Kidney (tissue), 22 donors: ENCODE measurements at regions of chr22 and their contacts with region 1.

Region 1: GRCh38 chr22:29040385-29041275 is 21.0 kb downstream of the C22orf31 start:
- DNase-seq: peak in 3 of 5 donors; percentile 79 to 90 (median 89)
- H3K4me3 ChIP-seq: no peak overlapping the region
- H3K27ac ChIP-seq: no peak overlapping the region
- H3K4me1 ChIP-seq: peaks cover 4 to 7% (median 6%) of the 10 kb centered on the region in 3 donors
- H3K27me3 ChIP-seq: no peaks in the 10 kb centered on the region
- CTCF ChIP-seq: peak; percentile 99

Region 2: DNA sequence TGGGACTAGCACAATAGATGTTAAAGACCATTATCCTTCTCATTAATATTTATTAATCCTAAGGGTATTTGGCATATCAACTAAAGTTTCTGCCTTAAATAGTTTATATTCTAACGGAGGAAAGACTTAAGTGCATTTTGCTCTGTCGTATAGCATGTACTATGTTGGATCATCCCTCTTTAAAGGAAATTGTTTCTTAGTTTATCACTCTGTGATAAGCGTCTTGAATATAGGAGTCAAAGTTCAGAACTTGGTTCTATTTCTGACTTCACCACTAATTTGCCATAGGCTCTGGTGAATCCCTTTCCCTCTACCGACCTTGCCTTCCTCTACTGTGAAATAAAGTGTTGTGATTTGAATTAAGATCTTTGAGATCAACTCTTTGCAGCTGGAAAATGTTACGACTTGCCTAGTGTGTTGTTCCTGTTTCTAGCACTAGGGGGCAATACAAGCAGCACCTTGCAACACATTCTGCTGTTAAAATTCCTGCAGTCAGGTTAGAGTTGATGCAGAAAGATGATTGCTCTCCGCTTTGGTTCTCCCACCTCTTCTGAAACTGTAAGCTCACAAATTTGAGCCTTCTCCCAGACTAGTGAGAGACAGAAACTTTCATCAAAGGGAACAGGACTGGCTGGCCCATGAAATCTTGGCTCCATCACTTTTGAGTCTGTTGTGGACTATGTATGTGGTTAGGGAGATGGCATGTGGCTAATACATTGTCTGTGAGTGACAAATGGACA is 185.1 kb before region 1 on chr22:
- intact Hi-C with region 1: loop called (anchors 5 kb)
- DNase-seq: peak in 4 of 5 donors; percentile 70 to 91 (median 80)
- H3K4me3 ChIP-seq: no peak overlapping the region
- H3K27ac ChIP-seq: no peak overlapping the region
- H3K4me1 ChIP-seq: peaks cover 0 to 3% (median 0%) of the 10 kb centered on the region in 3 donors
- H3K27me3 ChIP-seq: no peaks in the 10 kb centered on the region
- CTCF ChIP-seq: peak; percentile 96